Dorsolateral prefrontal cortex (tissue), 120 donors: ENCODE measurements at regions of chr22 and their contacts with region 1.

Region 1: GRCh38 chr22:33875316-33875715 is 45.0 kb downstream of the LARGE1 start:
- DNase-seq: peak in 1 of 10 donors; percentile 94
- H3K4me3 ChIP-seq: no peak overlapping the region
- H3K27ac ChIP-seq: peak overlapping the region in 9 of 59 donors; percentile 5 to 36 (median 16)
- H3K27me3 ChIP-seq: no peaks in the 10 kb centered on the region
- CTCF ChIP-seq: no peak

Region 2: DNA sequence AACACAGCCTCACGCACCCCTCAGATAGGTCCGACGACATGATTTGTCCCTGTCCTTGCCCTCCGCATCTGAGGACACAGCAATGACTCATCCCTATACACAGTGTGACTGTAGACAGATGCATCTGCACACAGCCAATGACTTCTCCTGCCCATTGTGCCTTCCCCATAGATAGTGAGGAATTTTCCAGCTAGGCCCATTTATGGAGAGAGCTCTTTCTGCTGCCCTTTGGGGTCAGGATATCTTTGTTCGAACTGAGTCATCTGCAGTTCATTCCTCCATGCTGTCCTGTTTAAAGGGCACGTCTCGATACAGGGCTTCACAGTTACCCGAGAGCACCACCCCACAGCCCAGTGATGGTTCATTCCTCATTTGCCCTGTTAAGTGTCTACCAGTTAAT is 51.8 kb before region 1 on chr22:
- intact Hi-C with region 1: loop called in 1 of 2 experiments (anchors 1 kb)
- DNase-seq: no peak
- H3K4me3 ChIP-seq: no peak overlapping the region
- H3K27ac ChIP-seq: no peak overlapping the region
- H3K27me3 ChIP-seq: no peaks in the 10 kb centered on the region
- CTCF ChIP-seq: no peak

Region 3: GRCh38 chr22:33971561-33971961 is 96.2 kb after region 1 on chr22:
- intact Hi-C with region 1: no loop called
- DNase-seq: peak in 7 of 10 donors; percentile 4 to 78 (median 46)
- H3K4me3 ChIP-seq: peak overlapping the region in 2 of 59 donors; percentile 0 to 8
- H3K27ac ChIP-seq: peak overlapping the region in 17 of 59 donors; percentile 16 to 74 (median 48)
- H3K27me3 ChIP-seq: peaks cover 0 to 5% (median 0%) of the 10 kb centered on the region in 45 donors
- CTCF ChIP-seq: no peak